ENCODE measurements at regions of chr4 and their contacts with region 1.

Region 1: DNA sequence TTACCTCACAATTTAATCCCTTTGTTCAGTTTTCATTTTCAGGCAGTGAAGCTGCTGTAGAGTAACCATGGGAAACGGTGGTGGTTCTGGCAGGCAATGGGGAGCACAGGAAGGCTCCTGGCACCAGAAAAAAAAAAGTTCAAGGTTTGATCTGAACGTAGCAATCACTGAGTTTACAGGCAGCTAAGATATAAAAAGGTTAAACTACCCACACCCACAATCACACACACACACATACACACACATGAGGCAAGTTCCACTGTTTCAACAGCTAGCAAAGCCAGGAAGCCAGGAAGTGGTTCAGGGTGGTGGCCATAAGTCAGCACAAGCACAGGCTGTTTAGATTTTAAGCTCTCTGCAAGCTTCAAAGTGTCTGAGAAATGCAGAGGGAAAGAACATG is at the start of gene SULT1B1:
- DNase-seq: peak; percentile 79
- H3K4me3 Mint-ChIP-seq: peak within 1 kb of the TSS; percentile 79
- H3K27ac Mint-ChIP-seq: peak within 1 kb of the TSS; percentile 98
- H3K4me1 Mint-ChIP-seq: peaks cover 56% of the 10 kb centered on the region
- H3K27me3 Mint-ChIP-seq: no peaks in the 10 kb centered on the region
- total RNA-seq, gene SULT1B1: 4.3 to 5.4 TPM

Region 2: DNA sequence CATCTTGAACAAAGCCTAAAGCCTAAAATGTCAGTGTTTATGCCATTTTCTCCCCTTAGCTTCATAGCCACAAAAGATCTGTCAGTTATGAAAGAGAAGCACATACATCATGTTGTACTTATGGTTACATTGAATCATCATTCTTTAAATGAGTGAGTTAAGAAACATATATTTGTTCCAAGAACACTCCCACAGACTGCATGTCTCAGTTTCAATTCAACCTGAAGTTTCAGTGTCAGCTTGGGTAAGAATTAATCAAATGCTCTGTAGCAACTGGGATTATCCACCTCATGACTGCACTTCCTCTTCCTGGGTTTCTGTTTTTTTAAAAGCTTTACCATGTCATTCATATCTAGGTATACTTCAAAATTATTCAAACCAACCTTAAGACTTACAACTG is 1511.0 kb before region 1 on chr4:
- CTCF ChIA-PET with region 1: no interaction called
- intact Hi-C with region 1: loop called (anchors 10 kb)
- DNase-seq: peak; percentile 25
- H3K4me3 Mint-ChIP-seq: no peak overlapping the region
- H3K27ac Mint-ChIP-seq: peak overlapping the region; percentile 88
- H3K4me1 Mint-ChIP-seq: peaks cover 16% of the 10 kb centered on the region
- H3K27me3 Mint-ChIP-seq: peaks cover 7% of the 10 kb centered on the region

Region 3: DNA sequence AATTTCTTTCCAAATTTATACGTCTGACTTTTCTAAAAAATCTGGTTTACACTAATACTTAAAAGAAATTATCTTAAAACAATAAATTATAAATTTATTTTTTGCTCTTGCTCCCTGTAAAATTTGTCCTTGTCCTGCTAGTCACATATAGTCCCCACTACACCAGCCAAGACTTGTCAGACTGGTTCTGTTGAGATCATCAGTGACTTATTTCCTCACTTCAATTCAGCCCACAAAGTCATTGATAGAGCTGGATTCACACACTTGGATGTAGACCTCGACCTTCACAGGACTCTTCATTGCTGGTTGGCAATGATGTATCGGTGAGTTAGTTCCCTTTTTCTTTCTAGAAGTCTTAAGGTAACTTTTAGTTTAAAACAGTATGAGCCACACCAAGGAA is 1313.3 kb before region 1 on chr4 and contains the start of gene TMPRSS11E:
- CTCF ChIA-PET with region 1: no interaction called
- intact Hi-C with region 1: loop called (anchors 10 kb)
- DNase-seq: no peak
- H3K4me3 Mint-ChIP-seq: no peak within 1 kb of the TSS
- H3K27ac Mint-ChIP-seq: no peak within 1 kb of the TSS
- H3K4me1 Mint-ChIP-seq: peaks cover 26% of the 10 kb centered on the region
- H3K27me3 Mint-ChIP-seq: no peaks in the 10 kb centered on the region
- total RNA-seq, gene TMPRSS11E: not detected

Region 4: DNA sequence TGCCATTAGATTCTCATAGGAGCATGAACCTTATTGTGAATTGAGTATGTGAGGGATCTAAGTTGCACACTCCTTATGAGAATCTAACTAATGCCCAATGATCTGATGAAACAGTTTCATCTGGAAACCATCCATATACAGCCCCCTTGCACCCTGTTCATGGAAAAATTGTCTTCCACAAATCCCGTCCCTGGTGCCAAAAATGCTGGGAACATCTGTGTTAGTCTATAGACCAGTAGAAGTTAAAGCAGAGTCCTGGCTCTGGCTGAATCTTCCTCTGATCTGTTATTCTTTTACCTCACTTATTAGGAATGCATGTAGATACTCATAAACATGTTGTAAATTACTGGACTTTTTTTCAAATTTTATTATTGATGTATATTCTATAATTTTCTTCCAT is 29.2 kb before region 1 on chr4:
- CTCF ChIA-PET with region 1: no interaction called
- intact Hi-C with region 1: loop called (anchors 2 kb)
- DNase-seq: no peak
- H3K4me3 Mint-ChIP-seq: no peak overlapping the region
- H3K27ac Mint-ChIP-seq: no peak overlapping the region
- H3K4me1 Mint-ChIP-seq: peaks cover 7% of the 10 kb centered on the region
- H3K27me3 Mint-ChIP-seq: no peaks in the 10 kb centered on the region

Region 5: GRCh38 chr4:69881173-69881773 is 120.8 kb after region 1 on chr4:
- CTCF ChIA-PET with region 1: interaction called, 12 read pairs
- intact Hi-C with region 1: no loop called
- DNase-seq: peak; percentile 39
- H3K4me3 Mint-ChIP-seq: no peak overlapping the region
- H3K27ac Mint-ChIP-seq: no peak overlapping the region
- H3K4me1 Mint-ChIP-seq: peaks cover 3% of the 10 kb centered on the region
- H3K27me3 Mint-ChIP-seq: peaks cover 1% of the 10 kb centered on the region

Region 6: DNA sequence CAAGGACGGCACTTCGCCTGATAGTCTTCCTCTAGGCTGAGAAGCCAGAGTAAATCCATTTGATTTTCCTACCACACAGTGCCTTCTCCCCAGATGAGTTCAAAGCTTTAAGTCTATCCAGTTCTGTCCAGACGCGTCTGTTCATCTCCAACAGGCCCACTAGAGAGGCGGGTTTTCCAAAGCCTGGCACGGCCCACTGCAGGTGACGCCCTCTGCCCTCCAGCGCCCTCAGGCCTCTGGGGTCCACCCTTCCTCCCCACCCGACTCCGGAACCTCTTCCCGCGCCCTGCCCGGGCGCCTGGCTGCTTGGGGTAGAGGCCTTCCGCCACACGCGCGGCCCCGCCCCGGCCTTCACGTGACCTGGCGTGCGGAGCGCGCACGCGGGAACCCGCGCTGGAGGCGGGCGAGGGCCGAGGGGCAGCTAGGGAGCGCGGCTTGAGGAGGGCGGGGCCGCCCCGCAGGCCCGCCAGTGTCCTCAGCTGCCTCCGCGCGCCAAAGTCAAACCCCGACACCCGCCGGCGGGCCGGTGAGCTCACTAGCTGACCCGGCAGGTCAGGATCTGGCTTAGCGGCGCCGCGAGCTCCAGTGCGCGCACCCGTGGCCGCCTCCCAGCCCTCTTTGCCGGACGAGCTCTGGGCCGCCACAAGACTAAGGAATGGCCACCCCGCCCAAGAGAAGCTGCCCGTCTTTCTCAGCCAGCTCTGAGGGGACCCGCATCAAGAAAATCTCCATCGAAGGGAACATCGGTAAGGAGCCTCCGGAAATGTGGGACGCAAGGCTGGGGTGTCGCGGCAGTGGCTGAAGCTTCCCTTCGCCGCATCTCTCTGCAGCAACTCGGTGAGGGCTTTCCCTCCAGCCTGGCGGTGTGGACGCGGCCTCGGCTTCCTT is 1233.0 kb after region 1 on chr4 and contains the start of gene DCK:
- CTCF ChIA-PET with region 1: no interaction called
- intact Hi-C with region 1: loop called (anchors 5 kb)
- DNase-seq: peak; percentile 83
- H3K4me3 Mint-ChIP-seq: peak within 1 kb of the TSS; percentile 96
- H3K27ac Mint-ChIP-seq: peak within 1 kb of the TSS; percentile 91
- H3K4me1 Mint-ChIP-seq: peaks cover 34% of the 10 kb centered on the region
- H3K27me3 Mint-ChIP-seq: no peaks in the 10 kb centered on the region
- total RNA-seq, gene DCK: 32.1 to 34.1 TPM